Endothelial cell of umbilical vein (primary cell): ENCODE measurements at regions of chrX and their contacts with region 1.

Region 1: GRCh38 chrX:46408553-46409407 is 136.4 kb downstream of the ZNF674 start:
- DNase-seq: peak; percentile 74
- H3K4me3 ChIP-seq: no peak overlapping the region
- H3K27ac ChIP-seq: no peak overlapping the region
- H3K4me1 ChIP-seq: no peaks in the 10 kb centered on the region
- H3K27me3 ChIP-seq: no peaks in the 10 kb centered on the region
- CTCF ChIP-seq: peak; percentile 51 to 52
- POLR2A ChIP-seq: no peak

Region 2: DNA sequence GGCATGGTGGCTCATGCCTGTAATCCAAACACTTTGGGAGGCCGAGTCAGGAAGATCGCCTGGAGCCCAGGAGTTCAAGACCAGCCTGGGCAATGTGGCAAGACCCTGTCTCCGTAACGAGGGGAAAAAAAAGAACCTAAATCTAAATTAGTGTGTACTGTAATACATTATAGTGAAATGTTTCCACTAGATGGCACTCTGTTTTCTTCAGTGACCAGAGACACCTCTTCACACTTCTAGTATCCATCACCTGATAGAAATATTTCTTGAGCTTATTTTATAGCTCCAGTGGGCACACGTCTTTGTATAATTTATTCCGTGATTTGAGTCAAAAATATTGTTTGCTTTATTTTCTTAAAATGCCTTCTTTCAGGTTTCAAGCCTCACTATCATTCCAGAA is 607.2 kb before region 1 on chrX:
- CTCF ChIA-PET with region 1: interaction called, 11 read pairs
- POLR2A ChIA-PET with region 1: no interaction called
- dilution Hi-C with region 1: no loop called
- intact Hi-C with region 1: no loop called
- DNase-seq: peak; percentile 43
- H3K4me3 ChIP-seq: no peak overlapping the region
- H3K27ac ChIP-seq: peak overlapping the region; percentile 36
- H3K4me1 ChIP-seq: peaks cover 31% of the 10 kb centered on the region
- H3K27me3 ChIP-seq: no peaks in the 10 kb centered on the region
- CTCF ChIP-seq: peak in 1 of 2 donors; percentile 9
- POLR2A ChIP-seq: no peak

Region 3: DNA sequence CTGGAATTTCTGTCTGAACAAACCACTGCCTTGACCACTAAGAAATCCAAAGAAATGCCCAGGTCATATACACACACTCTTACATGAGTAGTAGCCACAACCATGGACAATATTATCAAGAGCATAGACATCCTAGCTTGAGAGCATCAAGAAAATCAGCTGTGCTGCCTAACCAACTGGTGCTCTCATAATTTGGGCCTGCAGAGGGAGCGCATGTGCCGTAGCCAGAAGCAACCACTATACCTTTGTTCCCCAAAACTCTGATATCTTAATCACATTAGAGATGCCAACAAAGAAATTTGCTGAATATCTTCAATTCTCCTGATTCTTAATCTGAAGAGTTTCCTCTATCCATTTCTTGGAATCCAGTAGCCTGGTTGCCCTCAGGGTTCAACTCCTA is 27.1 kb before region 1 on chrX:
- CTCF ChIA-PET with region 1: interaction called, 22 read pairs
- POLR2A ChIA-PET with region 1: no interaction called
- dilution Hi-C with region 1: no loop called
- intact Hi-C with region 1: loop called (anchors 1 kb)
- DNase-seq: peak; percentile 24
- H3K4me3 ChIP-seq: no peak overlapping the region
- H3K27ac ChIP-seq: no peak overlapping the region
- H3K4me1 ChIP-seq: peaks cover 4% of the 10 kb centered on the region
- H3K27me3 ChIP-seq: no peaks in the 10 kb centered on the region
- CTCF ChIP-seq: peak; percentile 16 to 40
- POLR2A ChIP-seq: no peak

Region 4: GRCh38 chrX:46433892-46434291 is 25.1 kb after region 1 on chrX:
- CTCF ChIA-PET with region 1: no interaction called
- POLR2A ChIA-PET with region 1: no interaction called
- dilution Hi-C with region 1: no loop called
- intact Hi-C with region 1: no loop called
- DNase-seq: no peak
- H3K4me3 ChIP-seq: no peak overlapping the region
- H3K27ac ChIP-seq: no peak overlapping the region
- H3K4me1 ChIP-seq: no peaks in the 10 kb centered on the region
- H3K27me3 ChIP-seq: peaks cover 0 to 2% of the 10 kb centered on the region in 2 experiments
- CTCF ChIP-seq: no peak
- POLR2A ChIP-seq: no peak